Activated naive CD4-positive, alpha-beta T cell treated with anti-CD3 and anti-CD28 coated beads, Interleukin-2, amount 10 ng/mL, durations not matched to agents 7 days and 5 days (primary cell): ENCODE measurements at regions of chr19 and their contacts with region 1.

Region 1: GRCh38 chr19:43595999-43596841 is at the starts of genes IRGQ and ZNF576:
- DNase-seq: peak; percentile 100
- H3K4me3 Mint-ChIP-seq: peak within 1 kb of the TSS; percentile 90
- H3K27ac Mint-ChIP-seq: peak within 1 kb of the TSS; percentile 98
- H3K4me1 Mint-ChIP-seq: peaks cover 43% of the 10 kb centered on the region
- H3K27me3 Mint-ChIP-seq: peaks cover 5% of the 10 kb centered on the region

Region 2: GRCh38 chr19:43446746-43447489 is 149.3 kb before region 1 on chr19:
- CTCF ChIA-PET with region 1: interaction called, 10 read pairs
- DNase-seq: peak; percentile 84
- H3K4me3 Mint-ChIP-seq: no peak overlapping the region
- H3K27ac Mint-ChIP-seq: no peak overlapping the region
- H3K4me1 Mint-ChIP-seq: peaks cover 45% of the 10 kb centered on the region
- H3K27me3 Mint-ChIP-seq: peaks cover 4% of the 10 kb centered on the region

Region 3: DNA sequence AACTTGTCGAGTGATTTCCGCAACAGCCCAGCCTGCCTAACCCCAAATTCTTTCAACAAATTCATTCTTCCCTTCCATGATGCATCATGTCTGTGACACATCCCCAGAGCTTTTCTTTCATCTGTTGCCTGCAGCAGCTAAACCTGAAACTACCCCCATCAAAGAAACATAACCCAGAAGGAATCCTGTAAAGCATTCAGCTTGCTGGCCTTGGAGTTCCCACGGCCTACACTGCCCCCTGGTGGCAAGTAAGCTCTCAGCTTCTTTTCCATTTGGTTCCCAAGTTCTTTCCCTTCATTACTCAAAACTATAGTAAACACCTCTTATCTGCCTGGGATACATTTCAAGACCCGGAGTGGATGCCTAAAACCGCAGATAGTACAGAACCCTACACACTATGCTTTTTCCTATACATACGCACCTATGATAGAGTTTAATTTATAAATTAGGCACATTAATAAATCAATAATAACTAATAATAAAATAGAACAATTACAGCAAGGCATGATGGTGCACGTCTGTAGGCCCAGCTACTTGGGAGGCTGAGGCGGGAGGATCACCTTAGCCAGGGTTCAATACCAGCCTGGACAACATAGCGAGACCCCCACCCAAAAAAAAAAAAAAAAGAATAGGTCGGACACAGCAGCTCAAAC is 76.7 kb before region 1 on chr19:
- CTCF ChIA-PET with region 1: interaction called, 24 read pairs
- DNase-seq: peak; percentile 86
- H3K4me3 Mint-ChIP-seq: no peak overlapping the region
- H3K27ac Mint-ChIP-seq: peak overlapping the region; percentile 62
- H3K4me1 Mint-ChIP-seq: peaks cover 18% of the 10 kb centered on the region
- H3K27me3 Mint-ChIP-seq: no peaks in the 10 kb centered on the region

Region 4: GRCh38 chr19:43532962-43533545 is 63.2 kb before region 1 on chr19 and contains the start of gene ZNF575:
- CTCF ChIA-PET with region 1: interaction called, 29 read pairs
- DNase-seq: peak; percentile 90
- H3K4me3 Mint-ChIP-seq: peak within 1 kb of the TSS; percentile 93
- H3K27ac Mint-ChIP-seq: peak within 1 kb of the TSS; percentile 98
- H3K4me1 Mint-ChIP-seq: peaks cover 27% of the 10 kb centered on the region
- H3K27me3 Mint-ChIP-seq: no peaks in the 10 kb centered on the region

Region 5: GRCh38 chr19:43575156-43575950 is 20.9 kb before region 1 on chr19 and contains the starts of genes PINLYP and XRCC1:
- CTCF ChIA-PET with region 1: interaction called, 40 read pairs
- DNase-seq: peak; percentile 99
- H3K4me3 Mint-ChIP-seq: peak within 1 kb of the TSS; percentile 97
- H3K27ac Mint-ChIP-seq: peak within 1 kb of the TSS; percentile 90
- H3K4me1 Mint-ChIP-seq: peaks cover 47% of the 10 kb centered on the region
- H3K27me3 Mint-ChIP-seq: peaks cover 24% of the 10 kb centered on the region

Region 6: GRCh38 chr19:43620061-43621001 is 24.1 kb after region 1 on chr19:
- CTCF ChIA-PET with region 1: no interaction called
- DNase-seq: peak; percentile 90
- H3K4me3 Mint-ChIP-seq: peak overlapping the region; percentile 94
- H3K27ac Mint-ChIP-seq: peak overlapping the region; percentile 98
- H3K4me1 Mint-ChIP-seq: peaks cover 45% of the 10 kb centered on the region
- H3K27me3 Mint-ChIP-seq: no peaks in the 10 kb centered on the region

Region 7: DNA sequence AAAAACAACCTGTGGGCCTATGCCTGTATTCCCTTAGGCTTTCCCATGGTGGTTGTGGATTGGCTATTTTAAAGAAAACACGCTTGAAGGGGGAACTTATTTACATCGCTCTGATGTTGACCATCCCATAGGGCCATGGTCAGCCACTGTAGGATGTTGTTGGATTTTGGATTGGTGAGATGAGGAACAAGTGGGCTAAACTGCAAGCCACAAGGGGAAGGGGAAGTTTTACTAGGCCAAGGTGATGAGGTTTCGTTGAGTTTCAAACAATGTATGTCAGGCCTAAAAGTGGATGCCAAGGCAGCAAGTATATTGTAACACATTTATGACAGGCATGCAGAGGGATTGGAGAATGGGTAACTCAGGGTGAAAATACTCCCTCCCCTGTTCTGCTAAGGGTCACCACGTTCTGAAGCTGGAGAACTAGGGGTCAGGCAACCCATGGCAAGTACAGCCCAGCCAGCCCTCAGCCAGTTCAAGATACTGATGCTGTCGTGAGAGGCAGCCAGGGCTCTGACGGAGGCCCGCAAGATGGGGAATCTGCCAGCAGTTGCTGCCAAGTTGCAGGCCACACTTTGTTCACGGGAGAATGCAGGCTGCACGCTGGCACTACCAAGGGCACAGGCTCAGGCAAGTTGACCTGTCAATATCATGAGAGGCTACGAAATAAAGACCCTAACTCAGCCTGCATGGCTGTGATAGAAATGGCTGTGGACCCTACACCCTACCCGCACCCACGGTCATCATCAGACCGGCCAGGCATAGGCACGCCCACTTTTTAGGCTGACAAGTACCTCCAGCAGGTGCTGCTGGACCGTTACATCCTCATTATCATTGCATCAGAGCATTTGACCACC is 130.7 kb after region 1 on chr19:
- CTCF ChIA-PET with region 1: no interaction called
- DNase-seq: no peak
- H3K4me3 Mint-ChIP-seq: no peak overlapping the region
- H3K27ac Mint-ChIP-seq: no peak overlapping the region
- H3K4me1 Mint-ChIP-seq: peaks cover 4% of the 10 kb centered on the region
- H3K27me3 Mint-ChIP-seq: peaks cover 3% of the 10 kb centered on the region